Heart left ventricle (tissue), 16 donors: ENCODE measurements at regions of chr13 and their contacts with region 1.

Region 1: GRCh38 chr13:113490496-113491417 is at the start of gene DCUN1D2:
- DNase-seq: peak; percentile 96 to 98 (median 97)
- ATAC-seq: peak; percentile 84 to 96 (median 93)
- H3K4me3 ChIP-seq: peak within 1 kb of the TSS; percentile 78 to 98 (median 94)
- H3K27ac ChIP-seq: peak within 1 kb of the TSS; percentile 87 to 98 (median 94)
- H3K4me1 ChIP-seq: peaks cover 0 to 85% (median 60%) of the 10 kb centered on the region in 12 donors
- H3K27me3 ChIP-seq: no peaks in the 10 kb centered on the region
- CTCF ChIP-seq: no peak
- POLR2A ChIP-seq: peak; percentile 70 to 88
- total RNA-seq, gene DCUN1D2: 95.4 to 247 (median 159) TPM

Region 2: DNA sequence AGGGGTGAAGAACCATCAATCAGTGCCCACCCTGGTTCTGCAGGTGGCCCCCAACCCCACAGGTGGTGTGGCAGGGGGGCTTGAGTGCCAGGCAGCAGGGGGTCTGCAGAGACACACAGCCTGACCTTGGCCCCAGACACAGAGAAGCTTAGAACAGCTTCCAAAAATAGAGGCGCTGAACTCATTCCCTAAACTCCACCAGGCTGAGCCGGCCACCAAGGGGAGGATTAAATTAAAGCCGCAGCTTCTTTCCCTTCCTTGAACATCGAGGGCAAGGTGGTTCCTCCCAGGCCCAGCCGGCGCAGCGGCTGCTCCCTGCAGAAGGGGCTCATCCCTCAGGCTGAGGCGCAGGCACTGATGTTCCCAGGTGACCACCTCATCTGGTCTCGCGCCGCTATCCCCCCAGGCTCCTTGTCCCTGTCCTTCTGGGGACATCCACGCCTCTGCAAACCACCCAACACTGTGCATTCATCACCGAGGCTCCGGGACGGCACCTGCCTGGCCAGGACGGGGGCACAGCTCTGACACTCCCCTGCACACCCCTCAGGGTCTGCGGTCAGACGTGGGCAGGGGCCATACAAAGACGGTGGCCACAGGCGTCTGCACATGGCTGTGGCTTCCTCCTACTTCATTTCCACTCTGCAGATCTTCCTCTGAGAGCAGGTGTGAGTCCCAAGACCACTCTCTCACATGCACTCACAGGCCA is 162.8 kb before region 1 on chr13:
- intact Hi-C with region 1: no loop called
- DNase-seq: no peak
- ATAC-seq: peak; percentile 63 to 83 (median 70)
- H3K4me3 ChIP-seq: no peak overlapping the region
- H3K27ac ChIP-seq: peak overlapping the region in 10 of 12 donors; percentile 24 to 76 (median 56)
- H3K4me1 ChIP-seq: peaks cover 0 to 14% (median 1%) of the 10 kb centered on the region in 12 donors
- H3K27me3 ChIP-seq: no peaks in the 10 kb centered on the region
- CTCF ChIP-seq: no peak
- POLR2A ChIP-seq: no peak

Region 3: GRCh38 chr13:113448885-113449692 is 41.7 kb before region 1 on chr13:
- intact Hi-C with region 1: loop called in 3 of 10 experiments (anchors 2 to 5 kb)
- DNase-seq: peak in 2 of 5 donors; percentile 43 to 67
- ATAC-seq: peak; percentile 0 to 25 (median 12)
- H3K4me3 ChIP-seq: peak overlapping the region in 11 of 12 donors; percentile 32 to 76 (median 64)
- H3K27ac ChIP-seq: peak overlapping the region; percentile 37 to 96 (median 72)
- H3K4me1 ChIP-seq: peaks cover 3 to 59% (median 31%) of the 10 kb centered on the region in 12 donors
- H3K27me3 ChIP-seq: no peaks in the 10 kb centered on the region
- CTCF ChIP-seq: no peak
- POLR2A ChIP-seq: no peak

Region 4: DNA sequence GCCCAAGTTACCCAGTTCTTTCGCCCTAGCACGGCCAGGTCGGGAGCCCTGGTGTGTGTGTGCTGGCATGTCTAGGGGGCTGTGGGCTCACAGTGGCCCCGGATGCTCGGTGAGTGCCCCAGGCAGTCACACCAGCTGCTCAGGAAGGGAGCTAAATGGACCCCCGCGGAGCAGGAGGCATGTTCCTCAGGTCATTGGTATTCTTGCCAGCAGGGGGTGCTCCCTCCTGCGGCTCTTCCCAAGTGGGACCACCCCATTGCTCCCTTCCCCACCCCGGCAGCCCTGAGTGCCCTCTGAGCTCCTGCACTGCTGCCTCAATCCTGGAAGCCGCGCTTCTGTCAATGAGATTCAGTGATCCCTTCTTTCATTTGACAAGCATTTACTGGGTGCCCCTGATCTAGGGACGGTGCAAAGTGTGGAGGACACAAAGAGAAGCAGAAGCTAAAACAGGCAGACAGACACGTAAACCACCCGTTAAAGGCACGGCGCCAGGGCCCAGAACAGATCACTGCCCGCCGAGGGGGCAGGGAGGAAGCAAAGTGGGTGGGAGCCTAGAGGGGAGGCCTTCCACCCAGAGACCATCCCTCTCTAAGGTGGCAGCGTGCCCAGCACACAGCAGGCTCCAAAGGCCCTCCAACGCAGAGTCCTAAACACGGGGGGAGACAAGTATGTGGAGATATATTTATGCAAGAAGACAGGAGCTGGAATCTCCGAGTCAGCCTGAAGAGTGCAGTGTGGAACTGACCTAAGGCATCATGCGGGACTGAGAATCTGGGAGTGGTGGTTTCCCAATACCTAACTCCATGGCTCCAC is 32.3 kb before region 1 on chr13:
- intact Hi-C with region 1: loop called in 5 of 10 experiments (anchors 5 kb)
- DNase-seq: peak in 4 of 5 donors; percentile 56 to 67 (median 62)
- ATAC-seq: peak; percentile 54 to 66 (median 62)
- H3K4me3 ChIP-seq: no peak overlapping the region
- H3K27ac ChIP-seq: peak overlapping the region in 11 of 12 donors; percentile 25 to 75 (median 60)
- H3K4me1 ChIP-seq: peaks cover 0 to 47% (median 12%) of the 10 kb centered on the region in 12 donors
- H3K27me3 ChIP-seq: no peaks in the 10 kb centered on the region
- CTCF ChIP-seq: peak; percentile 31 to 57 (median 41)
- POLR2A ChIP-seq: no peak

Region 5: GRCh38 chr13:113472355-113473062 is 18.2 kb before region 1 on chr13:
- intact Hi-C with region 1: loop called in 1 of 10 experiments (anchors 1 kb)
- DNase-seq: peak in 2 of 5 donors; percentile 56 to 65
- ATAC-seq: peak; percentile 62 to 89 (median 70)
- H3K4me3 ChIP-seq: peak overlapping the region in 8 of 12 donors; percentile 7 to 33 (median 23)
- H3K27ac ChIP-seq: peak overlapping the region; percentile 29 to 90 (median 73)
- H3K4me1 ChIP-seq: peaks cover 0 to 21% (median 8%) of the 10 kb centered on the region in 12 donors
- H3K27me3 ChIP-seq: no peaks in the 10 kb centered on the region
- CTCF ChIP-seq: peak in 4 of 12 donors; percentile 8 to 40 (median 16)
- POLR2A ChIP-seq: no peak

Region 6: DNA sequence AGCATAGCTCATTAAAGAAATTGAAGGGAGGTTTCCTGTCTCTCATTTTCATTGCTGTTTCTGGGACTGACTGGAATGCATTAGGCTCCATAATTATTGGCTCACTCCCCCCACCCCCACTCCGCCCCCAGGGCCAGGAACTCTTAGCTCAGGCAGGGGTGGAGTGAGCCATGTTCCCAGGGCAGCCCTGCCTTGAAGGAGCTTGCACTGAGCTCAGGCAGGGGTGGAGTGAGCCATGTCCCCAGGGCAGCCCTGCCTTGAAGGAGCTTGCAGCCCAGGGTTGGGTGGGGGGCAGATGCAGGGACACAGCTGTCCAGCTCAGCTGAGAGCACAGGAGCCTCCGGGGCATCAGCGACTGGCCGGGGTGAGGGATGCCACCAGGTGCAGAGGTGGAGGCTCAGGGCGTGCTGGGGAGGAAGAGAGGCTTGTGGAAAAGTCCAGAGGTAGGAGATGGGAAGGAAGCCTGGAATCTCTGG is 54.7 kb after region 1 on chr13:
- intact Hi-C with region 1: loop called in 2 of 10 experiments (anchors 5 to 10 kb)
- DNase-seq: peak in 3 of 5 donors; percentile 20 to 42 (median 41)
- ATAC-seq: peak; percentile 17 to 49 (median 44)
- H3K4me3 ChIP-seq: peak overlapping the region in 6 of 12 donors; percentile 4 to 26 (median 16)
- H3K27ac ChIP-seq: peak overlapping the region in 9 of 12 donors; percentile 21 to 78 (median 67)
- H3K4me1 ChIP-seq: peaks cover 0 to 50% (median 37%) of the 10 kb centered on the region in 12 donors
- H3K27me3 ChIP-seq: no peaks in the 10 kb centered on the region
- CTCF ChIP-seq: no peak
- POLR2A ChIP-seq: no peak